Activated T-helper 2 cell treated with anti-CD3 and anti-CD28 coated beads, Interferon-gamma antibody, Interleukin-2, Interleukin-4, amounts not matched to agents 10 μg/mL and 5 μg/mL and 100 μg/mL, durations not matched to agents 14 hours and 24 hours and 36 hours (primary cell): ENCODE measurements at regions of chr18 and their contacts with region 1.

Region 1: GRCh38 chr18:9069601-9070000 is 32.9 kb upstream of the NDUFV2 start:
- DNase-seq: no peak
- H3K4me3 Mint-ChIP-seq: no peak overlapping the region
- H3K27ac Mint-ChIP-seq: peak overlapping the region; percentile 53
- H3K4me1 Mint-ChIP-seq: peaks cover 26% of the 10 kb centered on the region
- H3K27me3 Mint-ChIP-seq: no peaks in the 10 kb centered on the region

Region 2: GRCh38 chr18:9017170-9017904 is 52.3 kb before region 1 on chr18:
- intact Hi-C with region 1: loop called (anchors 1 kb)
- DNase-seq: peak; percentile 53
- H3K4me3 Mint-ChIP-seq: peak overlapping the region; percentile 28
- H3K27ac Mint-ChIP-seq: peak overlapping the region; percentile 62
- H3K4me1 Mint-ChIP-seq: peaks cover 19% of the 10 kb centered on the region
- H3K27me3 Mint-ChIP-seq: no peaks in the 10 kb centered on the region

Region 3: GRCh38 chr18:9147440-9148202 is 78.0 kb after region 1 on chr18:
- intact Hi-C with region 1: loop called (anchors 1 kb)
- DNase-seq: peak; percentile 23
- H3K4me3 Mint-ChIP-seq: peak overlapping the region; percentile 61
- H3K27ac Mint-ChIP-seq: peak overlapping the region; percentile 91
- H3K4me1 Mint-ChIP-seq: peaks cover 57% of the 10 kb centered on the region
- H3K27me3 Mint-ChIP-seq: no peaks in the 10 kb centered on the region

Region 4: DNA sequence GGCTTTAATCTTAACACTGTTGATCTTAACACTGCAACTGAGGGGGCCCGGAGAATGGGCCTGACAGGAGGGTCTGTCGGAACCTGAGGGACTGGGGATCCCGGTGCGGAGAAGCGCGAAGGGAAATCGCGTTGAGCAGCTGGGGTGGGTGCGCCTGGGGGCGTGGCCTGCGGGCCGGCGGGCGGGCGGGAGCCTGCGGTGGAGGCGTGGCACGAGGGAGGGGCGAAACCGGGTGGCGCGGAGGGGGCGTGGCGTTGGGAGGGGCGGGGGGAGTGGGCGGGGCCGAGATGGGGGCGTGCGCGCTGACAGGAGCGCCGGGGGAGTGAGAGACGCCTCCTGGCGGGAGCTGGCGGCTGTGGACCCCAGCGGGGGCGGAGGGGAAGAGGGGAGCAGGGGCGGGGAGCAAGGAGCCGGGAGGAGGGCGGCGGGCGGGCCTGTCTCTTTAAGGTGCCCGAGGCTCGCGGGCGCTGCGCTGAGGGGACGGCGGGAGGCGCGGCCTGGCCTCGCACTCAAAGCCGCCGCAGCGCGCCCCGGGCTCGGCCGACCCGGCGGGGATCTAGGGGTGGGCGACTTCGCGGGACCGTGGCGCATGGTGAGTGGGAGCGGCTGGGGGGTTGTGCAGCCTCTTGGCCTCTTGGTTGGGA is 264.9 kb after region 1 on chr18 and contains the start of gene TWSG1:
- intact Hi-C with region 1: loop called (anchors 5 kb)
- DNase-seq: peak; percentile 89
- H3K4me3 Mint-ChIP-seq: peak within 1 kb of the TSS; percentile 84
- H3K27ac Mint-ChIP-seq: peak within 1 kb of the TSS; percentile 65
- H3K4me1 Mint-ChIP-seq: peaks cover 19% of the 10 kb centered on the region
- H3K27me3 Mint-ChIP-seq: peaks cover 25% of the 10 kb centered on the region
- total RNA-seq, gene TWSG1: 12.1 and 12.9 TPM in 2 replicates

Region 5: GRCh38 chr18:9516437-9517064 is 446.9 kb after region 1 on chr18:
- intact Hi-C with region 1: loop called (anchors 5 kb)
- DNase-seq: no peak
- H3K4me3 Mint-ChIP-seq: no peak overlapping the region
- H3K27ac Mint-ChIP-seq: no peak overlapping the region
- H3K4me1 Mint-ChIP-seq: no peaks in the 10 kb centered on the region
- H3K27me3 Mint-ChIP-seq: no peaks in the 10 kb centered on the region